ENCODE measurements at regions of chr1 and their contacts with region 1.

Region 1: DNA sequence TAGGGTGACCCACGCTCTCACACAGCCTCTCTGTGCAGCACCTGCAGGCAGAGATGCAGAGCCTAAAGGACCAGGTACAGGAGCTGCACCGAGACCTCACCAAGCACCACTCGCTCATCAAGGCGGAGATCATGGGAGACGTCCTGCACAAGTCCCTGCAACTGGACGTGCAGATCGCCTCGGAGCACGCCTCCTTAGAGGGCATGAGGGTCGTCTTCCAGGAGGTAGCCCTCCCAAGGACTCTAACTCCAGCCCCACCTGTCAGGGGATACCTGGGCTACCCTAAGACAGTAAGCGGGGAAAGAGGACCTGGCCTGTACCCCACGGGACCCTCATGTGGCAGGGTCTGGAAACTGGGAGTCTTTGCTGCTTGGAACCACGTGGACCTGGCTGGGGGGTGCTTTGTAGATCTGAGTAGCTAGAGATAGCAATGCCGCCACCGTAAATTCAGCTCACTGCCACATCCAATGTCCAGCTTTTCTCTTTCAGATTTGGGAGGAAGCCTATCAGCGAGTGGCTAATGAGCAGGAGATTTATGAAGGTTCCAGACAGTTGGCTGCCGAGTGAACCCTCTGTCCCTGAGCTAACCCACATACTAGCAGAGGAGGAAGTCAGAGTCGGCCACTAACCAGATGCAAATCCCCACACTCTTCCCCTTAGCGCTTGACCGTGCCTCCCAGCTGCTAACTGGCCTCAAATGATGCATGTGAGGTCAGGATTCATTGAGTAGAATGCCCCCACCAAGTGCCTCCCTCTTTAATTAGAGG is 6.5 kb downstream of the RNF207 start:
- DNase-seq: no peak
- H3K4me3 ChIP-seq: no peak overlapping the region
- H3K27ac ChIP-seq: no peak overlapping the region
- H3K4me1 ChIP-seq: no peaks in the 10 kb centered on the region
- H3K27me3 ChIP-seq: no peaks in the 10 kb centered on the region
- CTCF ChIP-seq: no peak
- POLR2A ChIP-seq: no peak

Region 2: GRCh38 chr1:5029136-5029535 is 1183.2 kb before region 1 on chr1:
- intact Hi-C with region 1: no loop called
- DNase-seq: no peak
- H3K4me3 ChIP-seq: no peak overlapping the region
- H3K27ac ChIP-seq: no peak overlapping the region
- H3K4me1 ChIP-seq: no peaks in the 10 kb centered on the region
- H3K27me3 ChIP-seq: peaks cover 0 to 7% of the 10 kb centered on the region in 2 donors
- CTCF ChIP-seq: no peak
- POLR2A ChIP-seq: no peak

Region 3: DNA sequence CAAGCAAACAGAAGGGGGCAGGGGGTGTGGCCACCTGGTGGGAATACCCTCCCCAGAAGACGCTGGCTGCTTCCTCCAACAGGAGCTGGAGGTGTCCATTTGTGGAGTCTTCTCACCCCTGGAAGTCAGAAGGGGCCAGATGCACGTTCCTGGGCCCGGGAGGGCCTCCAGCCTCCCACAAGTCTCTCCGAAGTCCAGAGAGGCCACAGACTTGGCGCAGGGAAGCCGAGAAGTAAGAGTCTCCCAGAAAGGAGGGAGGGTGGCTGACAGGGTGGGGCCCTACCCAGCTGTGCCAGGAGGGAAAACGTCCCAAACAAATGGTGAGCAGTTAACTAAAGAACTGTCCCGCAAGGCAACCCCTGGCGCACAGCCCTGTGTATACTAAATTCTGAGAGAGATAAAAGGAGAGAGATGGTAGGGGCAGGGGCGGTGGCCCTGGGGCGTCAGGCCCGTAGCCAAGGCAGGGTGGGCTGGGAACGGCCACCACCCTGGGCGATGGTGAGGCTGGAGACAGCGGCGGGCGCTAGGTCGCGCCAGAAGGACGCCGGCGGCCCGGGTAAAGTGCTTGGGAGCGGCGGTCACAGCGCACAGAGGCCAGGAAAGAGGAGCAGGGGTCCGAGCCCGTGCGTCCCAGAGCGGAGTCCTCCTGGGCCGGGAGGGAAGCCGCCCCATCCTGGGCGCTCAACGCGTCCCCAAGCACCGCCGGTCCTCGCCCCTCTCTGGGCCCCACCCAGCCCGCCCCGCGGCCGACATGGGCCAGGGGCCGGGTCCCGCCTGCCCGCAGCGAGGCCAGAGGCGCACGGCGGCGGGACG is 33.4 kb before region 1 on chr1:
- intact Hi-C with region 1: loop called (anchors 1 kb)
- DNase-seq: no peak
- H3K4me3 ChIP-seq: peak overlapping the region in 2 of 3 donors; percentile 36 to 66
- H3K27ac ChIP-seq: no peak overlapping the region
- H3K4me1 ChIP-seq: peaks cover 8 to 13% of the 10 kb centered on the region in 2 donors
- H3K27me3 ChIP-seq: peaks cover 12 to 60% of the 10 kb centered on the region in 2 donors
- CTCF ChIP-seq: no peak
- POLR2A ChIP-seq: no peak

Measured in breast epithelium (tissue), 4 donors.